Gastrocnemius medialis (tissue), 4 donors: ENCODE measurements at regions of chrX and their contacts with region 1.

Region 1: DNA sequence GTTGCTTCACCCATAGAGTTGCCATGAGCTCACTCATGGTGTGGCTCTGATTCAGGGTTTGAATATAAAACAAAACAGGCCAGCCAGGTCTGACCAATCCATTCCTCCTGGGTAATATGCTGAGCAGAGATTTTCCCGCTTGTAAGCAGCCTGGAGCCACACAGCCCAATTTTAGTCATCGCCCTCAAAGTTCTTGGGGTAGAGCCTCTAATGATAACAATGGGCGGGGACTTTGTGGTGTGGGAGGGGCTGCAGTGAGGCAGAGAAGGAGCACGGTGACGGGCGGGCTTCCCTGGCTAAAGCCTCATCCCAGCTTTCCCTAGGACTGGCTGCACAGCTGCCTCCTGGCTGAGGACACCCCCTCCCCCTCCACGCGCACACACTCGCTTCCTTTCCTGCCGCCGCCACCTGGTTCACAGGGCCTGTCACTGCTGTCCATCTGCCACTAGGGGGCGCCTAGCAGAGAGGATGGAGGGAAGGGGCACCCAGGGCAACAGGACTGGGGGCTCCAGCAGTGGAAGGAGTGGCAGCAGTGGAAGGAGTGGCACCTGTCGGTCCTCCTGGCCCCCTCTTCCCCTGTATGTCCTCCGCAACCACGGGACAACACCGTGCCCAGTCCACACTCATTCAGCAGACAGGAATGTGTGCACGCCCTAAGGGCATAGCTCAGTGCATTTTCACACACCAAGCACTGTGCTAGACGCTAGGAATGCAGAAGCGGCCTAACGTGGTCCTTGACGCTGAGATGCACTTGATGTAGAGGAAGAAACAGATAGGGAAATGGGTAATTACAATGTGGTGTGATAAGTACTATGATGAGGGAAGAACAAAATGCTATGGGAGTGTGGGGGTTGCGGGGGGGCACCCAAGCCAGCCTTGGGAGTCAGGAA is 26.8 kb downstream of the PRPS1 start:
- DNase-seq: peak in 1 of 2 donors; percentile 58
- ATAC-seq: peak; percentile 74 to 79
- H3K4me3 ChIP-seq: no peak overlapping the region
- H3K27ac ChIP-seq: peak overlapping the region in 2 of 4 donors; percentile 22 to 44
- H3K4me1 ChIP-seq: peaks cover 0 to 7% of the 10 kb centered on the region in 2 donors
- H3K27me3 ChIP-seq: no peaks in the 10 kb centered on the region
- CTCF ChIP-seq: peak; percentile 32 to 81 (median 73)
- POLR2A ChIP-seq: no peak

Region 2: GRCh38 chrX:107288676-107289075 is 366.4 kb before region 1 on chrX:
- in situ Hi-C with region 1: no loop called
- intact Hi-C with region 1: no loop called
- DNase-seq: no peak
- ATAC-seq: no peak
- H3K4me3 ChIP-seq: no peak overlapping the region
- H3K27ac ChIP-seq: no peak overlapping the region
- H3K4me1 ChIP-seq: no peaks in the 10 kb centered on the region
- H3K27me3 ChIP-seq: no peaks in the 10 kb centered on the region
- CTCF ChIP-seq: no peak
- POLR2A ChIP-seq: no peak

Region 3: DNA sequence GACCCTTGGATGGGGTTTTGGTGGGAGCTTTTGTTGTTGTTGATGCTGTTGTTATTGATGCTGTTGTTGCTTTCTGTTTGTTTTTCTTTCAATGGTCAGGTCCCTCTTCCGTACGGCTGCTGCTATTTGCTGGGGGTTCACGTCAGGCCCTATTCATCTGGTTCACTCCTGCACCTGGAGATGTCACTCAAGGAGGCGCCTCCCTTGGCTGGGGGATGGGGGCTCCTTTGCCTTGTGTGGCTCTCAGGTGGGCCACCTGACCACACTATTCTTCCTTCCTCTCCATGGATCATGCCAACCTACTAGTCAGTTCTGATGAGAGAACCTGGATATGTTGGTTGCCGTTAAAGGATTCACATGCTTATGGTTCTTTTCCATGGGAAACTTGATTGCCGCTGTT is 65.9 kb before region 1 on chrX:
- in situ Hi-C with region 1: no loop called
- intact Hi-C with region 1: no loop called
- DNase-seq: no peak
- ATAC-seq: no peak
- H3K4me3 ChIP-seq: no peak overlapping the region
- H3K27ac ChIP-seq: no peak overlapping the region
- H3K4me1 ChIP-seq: no peaks in the 10 kb centered on the region
- H3K27me3 ChIP-seq: peaks cover 0 to 4% (median 0%) of the 10 kb centered on the region in 3 donors
- CTCF ChIP-seq: no peak
- POLR2A ChIP-seq: no peak

Region 4: DNA sequence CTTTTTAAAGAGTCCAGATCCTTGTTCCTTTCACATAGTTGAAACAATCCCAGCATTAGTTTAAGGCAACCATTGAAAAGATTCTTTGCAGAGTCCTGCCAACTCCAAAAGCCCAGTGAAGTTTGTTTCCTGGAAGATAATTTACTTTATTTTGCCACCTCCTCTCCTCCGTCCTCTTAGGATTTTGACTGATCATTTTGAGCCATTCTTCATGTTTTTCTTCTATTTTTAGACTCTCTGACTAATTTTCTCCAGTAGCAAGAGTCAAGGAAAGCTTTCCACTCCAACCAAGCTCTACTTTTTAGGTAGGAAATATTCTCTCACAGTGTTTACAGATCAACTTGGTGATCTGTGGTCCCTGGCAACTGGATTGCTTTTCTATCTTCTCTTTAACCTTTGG is 132.7 kb after region 1 on chrX:
- in situ Hi-C with region 1: loop called in 3 of 4 experiments (anchors 5 to 10 kb)
- intact Hi-C with region 1: no loop called
- DNase-seq: no peak
- ATAC-seq: no peak
- H3K4me3 ChIP-seq: no peak overlapping the region
- H3K27ac ChIP-seq: no peak overlapping the region
- H3K4me1 ChIP-seq: no peaks in the 10 kb centered on the region
- H3K27me3 ChIP-seq: peaks cover 0 to 3% (median 0%) of the 10 kb centered on the region in 3 donors
- CTCF ChIP-seq: no peak
- POLR2A ChIP-seq: no peak

Region 5: DNA sequence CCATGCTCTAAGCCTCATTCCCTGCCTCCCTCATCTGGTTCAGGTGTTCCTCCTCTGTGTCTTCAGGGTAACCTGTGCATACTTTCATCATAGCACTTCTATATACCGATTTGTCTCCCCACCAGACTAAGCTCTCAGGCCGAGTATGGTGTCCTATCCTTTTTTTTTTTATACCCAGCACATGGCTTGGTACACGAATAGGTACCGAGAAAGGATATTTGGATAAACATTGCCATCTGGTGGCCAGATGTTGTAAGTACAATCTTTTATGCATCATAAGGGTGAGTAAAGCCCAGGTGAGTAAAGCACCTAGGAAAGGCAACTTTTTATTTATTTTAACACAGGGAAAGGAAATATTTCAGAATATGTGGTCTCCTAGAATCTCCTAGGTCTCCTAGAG is 238.9 kb after region 1 on chrX:
- in situ Hi-C with region 1: loop called (anchors 25 kb)
- intact Hi-C with region 1: loop called (anchors 2 kb)
- DNase-seq: no peak
- ATAC-seq: peak in 1 of 2 donors; percentile 87
- H3K4me3 ChIP-seq: no peak overlapping the region
- H3K27ac ChIP-seq: no peak overlapping the region
- H3K4me1 ChIP-seq: no peaks in the 10 kb centered on the region
- H3K27me3 ChIP-seq: no peaks in the 10 kb centered on the region
- CTCF ChIP-seq: peak; percentile 44 to 65 (median 57)
- POLR2A ChIP-seq: no peak

Region 6: DNA sequence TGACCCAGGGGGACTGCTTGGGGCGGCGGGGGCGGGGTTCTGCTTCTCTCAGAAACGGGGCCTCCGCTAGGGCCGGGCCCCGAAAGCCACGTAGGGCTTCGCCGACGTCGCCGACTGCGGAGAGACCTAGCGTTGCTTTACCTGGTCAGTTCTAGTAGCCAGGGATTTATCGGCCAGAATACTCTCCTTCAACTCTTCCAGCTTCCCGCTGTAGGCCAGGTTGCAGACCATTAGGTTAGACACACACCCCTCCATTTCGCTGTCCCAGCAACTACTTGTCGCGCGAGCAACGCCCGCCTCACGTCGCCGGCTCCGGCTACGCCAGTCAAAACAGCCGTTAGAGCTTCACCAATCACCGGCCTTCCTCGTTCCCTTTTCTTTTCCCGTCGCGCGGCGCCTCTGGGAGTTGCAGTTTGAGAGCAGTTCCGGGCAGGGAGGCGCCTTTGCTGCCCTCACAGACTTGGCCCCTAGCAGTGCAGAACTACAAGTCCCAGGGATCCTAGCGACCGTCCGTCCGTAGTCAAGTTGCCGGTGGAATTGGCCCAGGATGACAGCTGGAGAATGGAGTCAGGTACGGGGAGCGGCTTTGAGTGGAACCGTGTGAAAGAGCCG is 436.3 kb after region 1 on chrX and contains the starts of genes ATG4A and PSMD10:
- in situ Hi-C with region 1: no loop called
- intact Hi-C with region 1: loop called (anchors 5 kb)
- DNase-seq: peak; percentile 90 to 94
- ATAC-seq: peak; percentile 95 to 97
- H3K4me3 ChIP-seq: peak within 1 kb of the TSS; percentile 60 to 77 (median 74)
- H3K27ac ChIP-seq: peak within 1 kb of the TSS; percentile 82 to 89 (median 86)
- H3K4me1 ChIP-seq: peaks cover 3 to 13% of the 10 kb centered on the region in 2 donors
- H3K27me3 ChIP-seq: peaks cover 0 to 3% (median 0%) of the 10 kb centered on the region in 3 donors
- CTCF ChIP-seq: no peak
- POLR2A ChIP-seq: peak; percentile 61 to 80
- total RNA-seq, gene ATG4A: 18.3 to 22.1 (median 20.4) TPM
- total RNA-seq, gene PSMD10: 16.5 to 33.5 (median 18.6) TPM